Left lung (tissue), 14 donors: ENCODE measurements at regions of chr10 and their contacts with region 1.

Region 1: GRCh38 chr10:17737027-17737965 is 14.7 kb upstream of the TMEM236 start:
- DNase-seq: peak in 1 of 4 donors; percentile 37
- ATAC-seq: peak; percentile 57
- H3K4me3 ChIP-seq: no peak overlapping the region
- H3K27ac ChIP-seq: no peak overlapping the region
- H3K4me1 ChIP-seq: peaks cover 0 to 9% of the 10 kb centered on the region in 2 donors
- H3K27me3 ChIP-seq: no peaks in the 10 kb centered on the region
- CTCF ChIP-seq: peak; percentile 18 to 64

Region 2: DNA sequence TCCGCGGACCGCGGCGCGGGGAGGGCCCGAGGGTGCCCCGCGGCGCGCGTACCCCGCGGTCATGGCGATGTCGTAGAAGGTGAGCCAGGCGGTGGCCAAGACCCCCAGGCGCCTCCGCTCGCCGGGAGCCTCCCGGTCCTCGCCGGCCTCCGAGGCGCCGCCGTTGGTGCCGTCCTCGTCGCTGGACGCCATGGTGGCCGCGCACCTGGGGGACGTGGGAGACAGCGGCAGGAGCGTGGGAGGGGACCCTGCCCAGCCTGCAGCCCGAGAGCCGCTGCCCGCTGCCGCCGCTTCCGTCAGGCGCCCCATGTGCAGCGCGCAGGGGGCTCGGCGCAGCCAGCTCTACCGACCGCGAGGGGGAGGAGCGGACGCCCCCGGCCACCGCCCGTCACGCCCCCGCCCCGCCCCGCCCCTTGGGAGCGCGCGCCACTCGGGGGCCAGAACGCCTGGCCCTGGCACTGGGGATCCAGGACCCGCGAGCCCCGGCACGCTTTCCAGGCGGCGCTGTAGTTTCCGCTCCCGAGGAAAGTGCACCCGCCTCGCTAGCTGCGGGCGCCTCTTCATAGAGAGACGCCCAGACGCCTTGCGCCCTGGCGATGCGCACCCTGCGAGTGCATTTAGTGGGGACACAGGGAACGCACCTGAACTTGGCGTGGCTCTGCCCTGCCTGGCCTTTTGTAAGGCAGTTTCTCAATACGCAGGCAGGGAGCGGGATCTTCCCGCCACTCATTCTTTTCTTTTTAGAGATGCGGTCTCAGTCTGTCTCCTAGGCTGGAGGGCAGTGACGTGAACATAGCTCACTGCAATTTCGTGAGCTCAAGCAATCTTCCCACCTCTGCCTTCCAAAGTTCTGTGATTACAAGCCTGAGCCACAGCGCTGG is 120.0 kb before region 1 on chr10 and contains the start of gene HACD1:
- intact Hi-C with region 1: loop called in 1 of 2 experiments (anchors 10 kb)
- DNase-seq: peak; percentile 48 to 93 (median 77)
- ATAC-seq: peak; percentile 91
- H3K4me3 ChIP-seq: peak within 1 kb of the TSS; percentile 74 to 89
- H3K27ac ChIP-seq: peak within 1 kb of the TSS; percentile 90 to 92
- H3K4me1 ChIP-seq: peaks cover 0 to 11% of the 10 kb centered on the region in 2 donors
- H3K27me3 ChIP-seq: peaks cover 0 to 20% of the 10 kb centered on the region in 2 donors
- CTCF ChIP-seq: no peak
- polyA plus RNA-seq, gene HACD1: 21.8 to 27.8 (median 24.3) TPM